WTC11 (cell line): ENCODE measurements at regions of chr17 and their contacts with region 1.

Region 1: GRCh38 chr17:75632863-75633485 is at the start of gene SMIM5:
- DNase-seq: peak; percentile 94
- ATAC-seq: peak; percentile 71
- H3K4me3 Mint-ChIP-seq: peak within 1 kb of the TSS; percentile 24; the same call in 1 of the 2 replicates
- H3K27ac Mint-ChIP-seq: peak within 1 kb of the TSS; percentile 63; the same call in 1 of the 2 replicates
- H3K4me1 Mint-ChIP-seq: peaks cover 11% of the 10 kb centered on the region
- H3K27me3 Mint-ChIP-seq: no peaks in the 10 kb centered on the region
- CTCF ChIP-seq: peak; percentile 94
- total RNA-seq, gene SMIM5: 0.05 TPM in 1 of 3 replicates, not detected in the others

Region 2: DNA sequence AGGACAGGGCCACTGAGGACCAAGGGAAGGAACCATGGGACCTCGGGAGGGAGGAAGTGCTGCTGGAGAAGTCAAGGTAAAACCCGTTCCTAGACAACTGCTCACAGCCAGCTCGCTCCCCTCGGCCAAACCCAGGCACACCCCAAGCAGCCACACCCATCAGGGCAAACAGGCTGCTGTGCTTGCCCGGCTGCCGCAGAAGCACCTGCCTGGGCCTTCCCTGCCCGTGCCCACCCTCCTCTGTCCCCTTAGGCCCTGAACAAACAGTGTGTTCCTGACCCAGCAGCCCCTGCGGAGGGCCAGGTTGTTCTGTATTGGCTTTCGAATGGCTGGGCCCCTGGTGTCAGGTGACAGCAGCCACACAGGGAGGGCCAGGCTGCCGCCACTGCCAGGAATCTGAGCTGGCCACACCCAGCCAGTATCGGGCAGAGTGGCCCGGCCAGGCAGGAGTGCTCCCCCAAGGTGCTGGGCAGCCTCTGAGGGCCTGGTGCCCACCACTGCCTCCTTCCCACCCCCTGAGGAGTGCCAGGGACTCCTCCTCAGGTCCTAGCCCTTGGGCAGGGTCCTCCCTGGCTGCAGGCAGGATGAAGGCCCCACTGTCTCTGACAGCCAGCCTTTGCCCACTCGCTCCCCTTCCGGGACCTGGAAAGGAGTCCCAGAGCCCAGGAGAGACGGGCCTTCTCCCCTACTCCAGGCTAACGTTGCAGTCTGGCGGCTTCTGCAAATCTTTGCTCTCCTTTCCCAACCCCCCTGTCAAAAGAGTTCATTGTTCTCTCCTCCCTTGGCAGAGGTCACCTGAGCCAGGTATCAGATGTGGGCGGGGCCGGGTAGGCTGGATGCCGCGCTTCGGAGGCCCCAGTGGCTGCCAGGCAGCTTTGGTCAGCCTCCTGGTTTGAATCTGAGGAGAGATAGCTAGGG is 83.5 kb before region 1 on chr17:
- CTCF ChIA-PET with region 1: interaction called, 10 read pairs
- POLR2A ChIA-PET with region 1: no interaction called
- DNase-seq: peak; percentile 76
- ATAC-seq: peak; percentile 83
- H3K4me3 Mint-ChIP-seq: peak overlapping the region; percentile 62
- H3K27ac Mint-ChIP-seq: peak overlapping the region; percentile 95
- H3K4me1 Mint-ChIP-seq: peaks cover 36% of the 10 kb centered on the region
- H3K27me3 Mint-ChIP-seq: no peaks in the 10 kb centered on the region
- CTCF ChIP-seq: no peak

Region 3: GRCh38 chr17:75619506-75620431 is 13.2 kb before region 1 on chr17:
- CTCF ChIA-PET with region 1: interaction called, 304 read pairs
- POLR2A ChIA-PET with region 1: no interaction called
- DNase-seq: peak; percentile 88
- ATAC-seq: peak; percentile 89
- H3K4me3 Mint-ChIP-seq: no peak overlapping the region
- H3K27ac Mint-ChIP-seq: no peak overlapping the region
- H3K4me1 Mint-ChIP-seq: no peaks in the 10 kb centered on the region
- H3K27me3 Mint-ChIP-seq: no peaks in the 10 kb centered on the region
- CTCF ChIP-seq: peak; percentile 54; the same call in 1 of the 2 replicates

Region 4: DNA sequence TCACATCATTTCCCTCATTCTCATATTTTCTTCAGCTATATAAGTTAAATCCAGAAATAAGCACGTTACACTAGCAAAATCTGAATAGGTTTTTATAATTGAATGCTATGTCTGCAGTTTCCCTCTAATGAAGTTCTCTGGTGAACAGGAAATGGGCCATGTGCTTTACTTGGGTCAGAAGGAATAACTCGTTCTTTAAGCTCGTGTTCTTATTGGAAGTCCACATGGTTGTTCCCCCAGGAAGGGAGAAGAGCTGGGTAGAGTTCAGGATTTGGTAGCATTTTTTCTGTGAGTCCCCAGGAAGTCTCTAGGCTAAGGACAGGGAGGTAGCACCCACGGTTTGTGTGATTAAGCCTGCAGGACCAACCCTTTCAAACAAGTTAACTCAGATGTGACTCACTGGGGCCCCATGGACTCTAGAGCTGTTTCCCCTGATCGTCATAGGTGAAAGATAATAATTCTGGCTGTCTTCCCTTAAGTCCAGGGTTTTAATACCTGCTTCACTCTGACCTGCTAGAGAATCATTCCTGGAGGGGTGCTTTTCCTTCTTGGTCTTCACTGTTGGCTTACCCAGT is 50.6 kb after region 1 on chr17:
- CTCF ChIA-PET with region 1: interaction called, 17 read pairs
- POLR2A ChIA-PET with region 1: no interaction called
- DNase-seq: no peak
- ATAC-seq: no peak
- H3K4me3 Mint-ChIP-seq: no peak overlapping the region
- H3K27ac Mint-ChIP-seq: no peak overlapping the region
- H3K4me1 Mint-ChIP-seq: no peaks in the 10 kb centered on the region
- H3K27me3 Mint-ChIP-seq: no peaks in the 10 kb centered on the region
- CTCF ChIP-seq: no peak

Region 5: GRCh38 chr17:75738218-75738802 is 105.3 kb after region 1 on chr17:
- CTCF ChIA-PET with region 1: interaction called, 27 read pairs
- POLR2A ChIA-PET with region 1: no interaction called
- DNase-seq: no peak
- ATAC-seq: no peak
- H3K4me3 Mint-ChIP-seq: no peak overlapping the region
- H3K27ac Mint-ChIP-seq: peak overlapping the region; percentile 60
- H3K4me1 Mint-ChIP-seq: no peaks in the 10 kb centered on the region
- H3K27me3 Mint-ChIP-seq: no peaks in the 10 kb centered on the region
- CTCF ChIP-seq: no peak

Region 6: DNA sequence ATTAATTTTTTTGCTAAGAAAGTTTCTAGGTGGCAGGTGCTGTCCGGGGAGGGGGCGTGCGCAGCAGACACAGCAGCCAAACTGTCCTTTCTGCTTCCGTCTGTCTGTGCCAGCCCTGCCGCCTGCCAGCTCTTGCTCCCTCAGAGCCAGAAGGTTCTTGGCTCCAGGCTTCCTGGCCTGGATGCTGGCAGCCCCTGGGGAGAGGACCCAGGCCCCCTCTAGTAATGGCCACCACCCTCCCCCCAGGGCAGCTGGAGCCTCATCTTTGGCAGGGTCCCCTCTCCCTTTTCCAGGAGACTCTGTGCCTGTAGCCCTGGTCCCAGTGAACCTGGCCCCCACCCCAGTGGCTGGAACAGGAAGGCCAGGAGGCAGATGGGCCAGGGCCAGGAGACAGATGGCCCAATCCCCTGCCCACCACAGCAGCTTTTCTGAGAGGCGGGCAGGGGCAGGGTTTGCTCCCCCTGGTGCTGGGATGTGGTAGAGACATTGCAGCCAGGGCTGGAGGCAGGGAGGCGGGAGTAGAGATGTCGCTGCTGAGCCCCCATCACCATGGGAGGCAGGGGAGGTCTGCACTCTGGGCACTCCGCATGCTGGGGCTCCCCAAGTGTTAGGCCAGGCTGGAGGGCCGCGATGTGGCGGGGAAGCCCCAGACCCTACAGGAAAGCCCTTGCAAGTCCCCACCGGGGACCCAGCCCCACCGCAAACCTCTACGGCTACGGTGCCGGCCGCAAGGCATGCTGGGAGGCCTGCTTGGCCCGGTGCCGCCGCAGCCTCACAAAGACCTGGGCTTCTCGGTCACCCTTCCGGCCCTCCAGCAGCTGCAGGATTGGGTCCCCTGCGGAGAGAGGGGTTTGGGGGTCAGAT is 194.5 kb after region 1 on chr17:
- CTCF ChIA-PET with region 1: interaction called, 13 read pairs
- POLR2A ChIA-PET with region 1: no interaction called
- DNase-seq: peak; percentile 91
- ATAC-seq: peak; percentile 74
- H3K4me3 Mint-ChIP-seq: peak overlapping the region; percentile 47
- H3K27ac Mint-ChIP-seq: peak overlapping the region; percentile 63; the same call in 1 of the 2 replicates
- H3K4me1 Mint-ChIP-seq: peaks cover 27% of the 10 kb centered on the region
- H3K27me3 Mint-ChIP-seq: no peaks in the 10 kb centered on the region
- CTCF ChIP-seq: peak; percentile 71